Psoas muscle (tissue), 8 donors: ENCODE measurements at regions of chr3 and their contacts with region 1.

Region 1: GRCh38 chr3:156554842-156555687 is at the start of gene SSR3:
- DNase-seq: peak; percentile 100
- ATAC-seq: peak; percentile 100
- H3K4me3 ChIP-seq: peak within 1 kb of the TSS; percentile 80
- H3K27ac ChIP-seq: peak within 1 kb of the TSS; percentile 82
- H3K4me1 ChIP-seq: peaks cover 34% of the 10 kb centered on the region
- H3K27me3 ChIP-seq: no peaks in the 10 kb centered on the region
- CTCF ChIP-seq: peak; percentile 27
- total RNA-seq, gene SSR3: 53.2 to 121 (median 71.0) TPM

Region 2: DNA sequence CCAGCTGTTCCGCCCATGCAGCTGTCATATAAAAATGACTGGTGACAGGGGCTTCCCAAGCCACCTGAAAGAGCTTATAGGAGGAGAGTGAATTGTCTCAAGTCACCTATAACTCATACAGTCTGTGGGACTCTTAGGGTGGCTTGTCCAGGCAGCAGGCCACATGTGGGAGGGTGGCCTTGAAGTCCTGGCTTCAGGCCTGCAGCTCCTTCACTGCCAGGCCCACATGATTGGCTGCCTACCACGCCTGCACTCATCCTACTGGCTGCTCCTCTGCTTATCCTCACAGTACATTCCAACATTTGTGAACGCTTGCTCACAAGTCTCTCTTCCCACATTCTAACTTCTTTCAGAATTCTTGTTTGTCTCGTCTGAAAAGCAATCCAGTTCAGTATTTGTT is 78.3 kb after region 1 on chr3:
- intact Hi-C with region 1: loop called in 1 of 2 experiments (anchors 5 kb)
- DNase-seq: peak in 1 of 2 donors; percentile 43
- ATAC-seq: peak; percentile 39 to 66 (median 50)
- H3K4me3 ChIP-seq: no peak overlapping the region
- H3K27ac ChIP-seq: no peak overlapping the region
- H3K4me1 ChIP-seq: peaks cover 23% of the 10 kb centered on the region
- H3K27me3 ChIP-seq: no peaks in the 10 kb centered on the region
- CTCF ChIP-seq: no peak

Region 3: DNA sequence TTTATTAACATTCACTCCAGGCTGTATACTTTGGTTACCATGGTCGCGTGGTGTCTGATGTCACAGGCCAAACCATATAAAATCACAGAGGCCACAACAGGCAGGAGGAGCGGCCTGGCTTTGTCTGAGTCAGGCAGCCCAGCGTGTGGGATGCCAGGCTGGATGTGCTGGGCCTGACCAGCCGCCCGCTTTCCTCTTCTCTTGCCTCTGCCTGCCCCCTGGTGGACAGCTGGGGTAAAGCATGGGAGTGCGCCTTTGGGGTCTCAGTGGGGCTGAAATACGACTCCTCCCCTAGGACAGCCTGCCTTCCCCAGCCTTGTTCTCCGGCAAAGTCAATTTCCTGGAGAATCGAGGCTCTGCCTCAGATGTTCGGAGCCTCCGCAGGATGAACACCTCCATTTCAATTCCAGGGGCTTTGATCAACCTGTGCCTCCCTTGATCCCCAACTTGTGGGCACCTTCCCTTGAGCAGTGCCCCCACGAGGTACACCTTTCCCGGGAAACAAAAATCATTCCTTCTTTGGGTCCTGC is 526.7 kb after region 1 on chr3:
- intact Hi-C with region 1: loop called (anchors 5 to 10 kb)
- DNase-seq: peak; percentile 91 to 95
- ATAC-seq: peak; percentile 83 to 90 (median 88)
- H3K4me3 ChIP-seq: no peak overlapping the region
- H3K27ac ChIP-seq: no peak overlapping the region
- H3K4me1 ChIP-seq: peaks cover 19% of the 10 kb centered on the region
- H3K27me3 ChIP-seq: no peaks in the 10 kb centered on the region
- CTCF ChIP-seq: peak; percentile 98